ENCODE measurements at regions of chr16 and their contacts with region 1.

Region 1: DNA sequence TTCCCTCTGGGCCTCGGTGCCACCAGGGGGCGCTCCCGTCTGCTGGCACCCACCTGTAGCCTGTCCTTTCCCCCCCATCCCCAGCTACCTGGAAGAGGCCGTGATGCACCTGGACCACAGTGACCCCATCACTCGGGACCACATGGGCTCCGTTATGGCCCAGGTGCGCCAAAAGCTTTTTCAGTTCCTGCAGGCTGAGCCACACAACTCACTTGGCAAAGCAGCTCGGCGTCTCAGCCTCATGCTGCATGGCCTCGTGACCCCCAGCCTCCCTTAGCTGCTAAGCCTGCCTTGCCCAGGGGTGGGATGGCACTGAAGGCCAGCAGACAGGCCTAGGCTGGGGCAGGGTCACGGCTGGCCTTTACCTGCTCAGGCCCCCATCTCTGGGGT is 818 bp upstream of the NRN1L start:
- DNase-seq: peak; percentile 73 to 74
- H3K4me3 ChIP-seq: no peak overlapping the region
- H3K27ac ChIP-seq: no peak overlapping the region
- H3K4me1 ChIP-seq: peaks cover 0 to 4% of the 10 kb centered on the region in 2 donors
- H3K27me3 ChIP-seq: no peaks in the 10 kb centered on the region
- CTCF ChIP-seq: peak; percentile 8 to 87 (median 80)
- POLR2A ChIP-seq: no peak

Region 2: GRCh38 chr16:66608241-66609138 is 1275.4 kb before region 1 on chr16:
- intact Hi-C with region 1: no loop called
- DNase-seq: peak; percentile 95 to 96
- H3K4me3 ChIP-seq: no peak overlapping the region
- H3K27ac ChIP-seq: peak overlapping the region in 2 of 3 donors; percentile 28 to 37
- H3K4me1 ChIP-seq: peaks cover 13 to 29% of the 10 kb centered on the region in 2 donors
- H3K27me3 ChIP-seq: no peaks in the 10 kb centered on the region
- CTCF ChIP-seq: peak; percentile 79 to 91 (median 88)
- POLR2A ChIP-seq: no peak

Region 3: GRCh38 chr16:67968400-67969253 is 84.8 kb after region 1 on chr16 and contains the start of gene SLC12A4:
- intact Hi-C with region 1: no loop called
- DNase-seq: peak; percentile 81
- H3K4me3 ChIP-seq: peak within 1 kb of the TSS; percentile 77 to 94 (median 81)
- H3K27ac ChIP-seq: peak within 1 kb of the TSS; percentile 92 to 93 (median 93)
- H3K4me1 ChIP-seq: peaks cover 25 to 38% of the 10 kb centered on the region in 2 donors
- H3K27me3 ChIP-seq: no peaks in the 10 kb centered on the region
- CTCF ChIP-seq: no peak
- POLR2A ChIP-seq: peak; percentile 73 to 87
- total RNA-seq, gene SLC12A4: 47.0 to 65.1 (median 51.7) TPM

Region 4: GRCh38 chr16:68040507-68041288 is 156.8 kb after region 1 on chr16:
- intact Hi-C with region 1: loop called (anchors 5 kb)
- DNase-seq: peak; percentile 79 to 85
- H3K4me3 ChIP-seq: no peak overlapping the region
- H3K27ac ChIP-seq: no peak overlapping the region
- H3K4me1 ChIP-seq: peaks cover 0 to 3% of the 10 kb centered on the region in 2 donors
- H3K27me3 ChIP-seq: no peaks in the 10 kb centered on the region
- CTCF ChIP-seq: peak; percentile 69 to 92 (median 87)
- POLR2A ChIP-seq: no peak